ENCODE measurements at regions of chr3 and their contacts with region 1.

Region 1: GRCh38 chr3:167882067-167882667 is 146.6 kb downstream of the SERPINI1 start:
- DNase-seq: no peak
- ATAC-seq: peak; percentile 64
- H3K4me3 Mint-ChIP-seq: peak overlapping the region; percentile 5
- H3K27ac Mint-ChIP-seq: no peak overlapping the region
- H3K4me1 Mint-ChIP-seq: peaks cover 4% of the 10 kb centered on the region
- H3K27me3 Mint-ChIP-seq: no peaks in the 10 kb centered on the region
- CTCF ChIP-seq: peak; percentile 31

Region 2: DNA sequence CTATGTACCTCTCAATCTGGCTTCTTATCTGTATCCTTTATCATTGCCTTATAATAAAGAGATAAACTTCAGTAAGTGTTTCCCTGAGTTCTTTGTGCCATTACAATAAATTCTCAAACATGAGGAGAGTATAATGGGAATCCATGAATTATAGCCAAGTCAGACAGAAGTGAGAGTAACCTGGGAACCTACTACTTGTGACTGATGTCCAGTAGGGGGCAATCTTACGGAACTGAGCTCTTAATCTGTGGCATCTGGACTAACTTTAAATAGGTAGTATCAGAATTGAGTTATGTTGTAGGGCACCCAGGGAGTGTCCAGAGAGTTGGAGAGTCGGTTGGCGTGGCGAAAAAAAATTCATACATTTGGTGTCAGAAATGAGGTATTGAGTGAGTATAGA is 1044.6 kb before region 1 on chr3:
- CTCF ChIA-PET with region 1: no interaction called
- POLR2A ChIA-PET with region 1: no interaction called
- intact Hi-C with region 1: loop called (anchors 5 kb)
- DNase-seq: no peak
- ATAC-seq: no peak
- H3K4me3 Mint-ChIP-seq: no peak overlapping the region
- H3K27ac Mint-ChIP-seq: no peak overlapping the region
- H3K4me1 Mint-ChIP-seq: no peaks in the 10 kb centered on the region
- H3K27me3 Mint-ChIP-seq: no peaks in the 10 kb centered on the region
- CTCF ChIP-seq: no peak

Region 3: GRCh38 chr3:167406875-167407492 is 475.2 kb before region 1 on chr3:
- CTCF ChIA-PET with region 1: interaction called, 8 read pairs
- POLR2A ChIA-PET with region 1: no interaction called
- intact Hi-C with region 1: loop called (anchors 1 kb)
- DNase-seq: no peak
- ATAC-seq: no peak
- H3K4me3 Mint-ChIP-seq: no peak overlapping the region
- H3K27ac Mint-ChIP-seq: no peak overlapping the region
- H3K4me1 Mint-ChIP-seq: no peaks in the 10 kb centered on the region
- H3K27me3 Mint-ChIP-seq: no peaks in the 10 kb centered on the region
- CTCF ChIP-seq: no peak

Region 4: GRCh38 chr3:167734498-167735232 is 147.5 kb before region 1 on chr3 and contains the start of gene PDCD10:
- CTCF ChIA-PET with region 1: interaction called, 10 read pairs
- POLR2A ChIA-PET with region 1: no interaction called
- intact Hi-C with region 1: loop called (anchors 5 kb)
- DNase-seq: peak; percentile 87
- ATAC-seq: peak; percentile 87
- H3K4me3 Mint-ChIP-seq: no peak within 1 kb of the TSS
- H3K27ac Mint-ChIP-seq: no peak within 1 kb of the TSS
- H3K4me1 Mint-ChIP-seq: peaks cover 27% of the 10 kb centered on the region
- H3K27me3 Mint-ChIP-seq: no peaks in the 10 kb centered on the region
- CTCF ChIP-seq: no peak
- total RNA-seq, gene PDCD10: 54.0 and 54.8 TPM in 2 replicates

Region 5: GRCh38 chr3:167837466-167837865 is 44.7 kb before region 1 on chr3:
- CTCF ChIA-PET with region 1: interaction called, 15 read pairs
- POLR2A ChIA-PET with region 1: no interaction called
- intact Hi-C with region 1: loop called (anchors 1 kb)
- DNase-seq: no peak
- ATAC-seq: no peak
- H3K4me3 Mint-ChIP-seq: no peak overlapping the region
- H3K27ac Mint-ChIP-seq: no peak overlapping the region
- H3K4me1 Mint-ChIP-seq: peaks cover 8% of the 10 kb centered on the region
- H3K27me3 Mint-ChIP-seq: no peaks in the 10 kb centered on the region
- CTCF ChIP-seq: no peak

Measured in activated B cell treated with CpG ODN at 0.5 μM for 24 hours (primary cell).